Activated naive CD4-positive, alpha-beta T cell treated with anti-CD3 and anti-CD28 coated beads for 36 hours (primary cell): ENCODE measurements at regions of chr2 and their contacts with region 1.

Region 1: GRCh38 chr2:241877989-241878970 is 8.8 kb downstream of the RTP5 start:
- DNase-seq: peak; percentile 80
- H3K4me3 Mint-ChIP-seq: no peak overlapping the region
- H3K27ac Mint-ChIP-seq: no peak overlapping the region
- H3K4me1 Mint-ChIP-seq: peaks cover 24% of the 10 kb centered on the region
- H3K27me3 Mint-ChIP-seq: no peaks in the 10 kb centered on the region

Region 2: DNA sequence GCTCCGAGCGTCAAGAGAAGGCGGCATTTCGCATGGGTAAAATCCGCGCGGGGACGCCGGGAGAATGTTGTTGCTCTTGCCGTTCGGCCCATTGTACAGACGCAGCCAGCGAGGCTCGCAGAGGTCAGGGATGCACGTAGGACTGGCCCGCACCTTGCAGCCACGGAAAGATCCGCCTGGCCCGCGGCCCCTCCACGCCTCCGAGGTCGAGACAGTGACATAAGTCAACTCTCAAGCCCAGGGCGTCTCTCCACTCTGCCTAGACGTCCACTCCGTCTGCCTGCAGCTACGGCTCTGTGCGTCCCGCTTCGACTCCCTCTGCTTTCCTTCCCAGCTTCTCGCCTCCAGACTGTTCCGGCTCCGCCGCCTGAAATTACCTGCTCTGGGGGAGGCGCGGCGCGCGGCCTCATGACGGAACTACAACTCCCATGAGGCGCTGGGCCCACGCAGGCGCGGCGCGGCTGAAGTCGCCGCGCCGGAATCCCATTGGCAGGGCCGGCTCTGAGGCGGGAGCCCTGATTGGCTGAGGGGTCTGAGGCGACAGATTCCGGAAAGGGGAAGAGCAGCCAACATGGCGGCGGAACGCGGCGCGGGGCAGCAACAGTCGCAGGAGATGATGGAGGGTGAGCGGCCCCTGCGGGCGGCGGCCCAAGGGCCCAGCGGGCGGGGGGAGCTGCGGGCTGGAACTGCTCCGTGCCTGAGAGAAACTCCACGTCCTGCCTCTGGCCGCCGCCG is 728.2 kb before region 1 on chr2 and contains the start of gene PPP1R7:
- CTCF ChIA-PET with region 1: no interaction called
- intact Hi-C with region 1: loop called (anchors 5 kb)
- DNase-seq: peak; percentile 97
- H3K4me3 Mint-ChIP-seq: peak within 1 kb of the TSS; percentile 96
- H3K27ac Mint-ChIP-seq: peak within 1 kb of the TSS; percentile 85
- H3K4me1 Mint-ChIP-seq: peaks cover 44% of the 10 kb centered on the region
- H3K27me3 Mint-ChIP-seq: no peaks in the 10 kb centered on the region
- total RNA-seq, gene PPP1R7: 91.2 to 93.8 TPM

Region 3: DNA sequence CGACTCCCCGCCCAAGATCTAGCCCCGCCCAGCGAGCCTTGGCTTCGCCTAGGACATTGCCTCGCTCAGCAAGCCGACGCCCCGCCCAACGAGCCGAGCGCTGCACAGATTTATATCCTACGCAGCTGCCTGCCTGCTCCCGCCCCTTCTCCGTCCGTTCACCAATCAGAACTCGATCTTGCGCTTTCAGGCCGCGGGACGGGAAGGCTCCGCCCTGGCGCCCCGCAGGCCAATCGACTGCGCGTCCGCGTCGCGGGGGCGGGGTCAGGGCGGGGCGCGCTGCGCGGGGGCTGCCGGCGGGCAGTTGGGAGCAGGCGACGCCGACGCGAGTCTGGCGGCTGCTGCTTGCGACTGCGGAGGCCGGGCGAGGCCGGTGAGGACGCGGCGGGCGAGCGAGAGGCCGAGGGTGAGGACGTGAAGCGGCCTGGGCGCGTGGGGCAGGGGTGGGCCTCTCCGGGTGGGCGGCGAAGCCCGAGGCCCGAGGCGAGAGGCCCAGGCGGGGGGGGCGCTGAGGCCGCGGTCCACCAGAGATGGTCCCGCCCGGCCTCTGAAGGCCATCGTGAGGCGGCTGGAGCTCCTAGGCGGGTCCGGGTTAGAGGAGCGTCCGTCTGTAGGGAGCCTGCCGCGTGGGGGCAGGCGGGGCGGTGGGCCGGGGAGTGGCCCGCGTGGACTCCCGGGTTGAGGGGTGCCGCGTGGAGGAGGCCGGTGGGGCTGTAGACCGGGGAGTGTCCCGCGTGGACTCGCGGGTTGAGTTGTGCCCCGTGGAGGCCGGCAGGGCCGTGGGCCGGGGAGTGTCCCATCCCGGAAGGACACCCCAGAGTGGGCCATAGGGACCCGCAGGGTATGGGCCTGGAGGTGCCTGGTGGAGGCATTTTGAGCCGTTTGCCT is 522.1 kb before region 1 on chr2 and contains the start of gene FARP2:
- CTCF ChIA-PET with region 1: no interaction called
- intact Hi-C with region 1: loop called (anchors 1 kb)
- DNase-seq: peak; percentile 99
- H3K4me3 Mint-ChIP-seq: peak within 1 kb of the TSS; percentile 78
- H3K27ac Mint-ChIP-seq: peak within 1 kb of the TSS; percentile 76
- H3K4me1 Mint-ChIP-seq: peaks cover 27% of the 10 kb centered on the region
- H3K27me3 Mint-ChIP-seq: no peaks in the 10 kb centered on the region
- total RNA-seq, gene FARP2: 19.5 to 19.6 TPM

Region 4: DNA sequence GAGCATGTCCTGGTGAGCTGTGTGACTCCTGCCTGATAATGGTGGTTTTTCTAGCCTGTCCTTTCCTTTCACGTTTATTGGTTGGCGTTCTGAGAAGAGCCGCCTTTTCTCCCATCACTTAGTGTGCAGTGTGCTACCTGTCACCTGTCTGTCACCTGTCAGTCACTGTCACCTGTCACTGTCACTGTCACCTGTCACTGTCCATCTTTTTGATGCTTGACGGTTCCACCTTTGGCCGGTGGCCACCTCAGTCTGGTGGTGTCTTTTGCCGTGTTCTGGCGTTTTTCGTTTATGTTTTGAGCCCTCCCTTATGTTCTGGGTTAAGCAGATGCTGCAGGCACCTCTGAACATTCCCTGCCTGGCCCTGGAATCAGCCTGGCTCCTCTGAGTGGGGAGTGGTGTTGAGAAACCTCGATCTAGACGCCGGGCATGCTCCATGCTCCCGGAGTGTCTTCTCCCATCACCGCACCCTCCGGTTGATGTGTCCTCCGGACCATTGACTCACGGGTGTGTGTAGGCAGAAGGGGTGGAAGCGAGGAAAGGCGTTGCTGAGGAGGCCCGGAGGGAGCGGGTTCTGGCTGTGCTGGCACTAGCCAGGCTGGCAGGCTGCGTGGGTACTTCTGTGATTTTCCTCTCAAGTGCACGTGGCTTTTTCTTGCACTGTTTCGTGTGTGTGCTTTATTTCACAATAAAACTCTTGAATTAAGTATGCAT is 212.4 kb before region 1 on chr2:
- CTCF ChIA-PET with region 1: interaction called, 5 read pairs
- intact Hi-C with region 1: loop called (anchors 1 kb)
- DNase-seq: no peak
- H3K4me3 Mint-ChIP-seq: no peak overlapping the region
- H3K27ac Mint-ChIP-seq: no peak overlapping the region
- H3K4me1 Mint-ChIP-seq: peaks cover 7% of the 10 kb centered on the region
- H3K27me3 Mint-ChIP-seq: no peaks in the 10 kb centered on the region

Region 5: GRCh38 chr2:241724259-241724974 is 153.9 kb before region 1 on chr2:
- CTCF ChIA-PET with region 1: interaction called, 13 read pairs
- intact Hi-C with region 1: loop called (anchors 1 kb)
- DNase-seq: peak; percentile 47
- H3K4me3 Mint-ChIP-seq: no peak overlapping the region
- H3K27ac Mint-ChIP-seq: no peak overlapping the region
- H3K4me1 Mint-ChIP-seq: peaks cover 2% of the 10 kb centered on the region
- H3K27me3 Mint-ChIP-seq: no peaks in the 10 kb centered on the region

Region 6: GRCh38 chr2:241844066-241844728 is 34.1 kb before region 1 on chr2:
- CTCF ChIA-PET with region 1: interaction called, 10 read pairs
- intact Hi-C with region 1: loop called (anchors 5 kb)
- DNase-seq: peak; percentile 90
- H3K4me3 Mint-ChIP-seq: peak overlapping the region; percentile 56
- H3K27ac Mint-ChIP-seq: peak overlapping the region; percentile 74
- H3K4me1 Mint-ChIP-seq: peaks cover 37% of the 10 kb centered on the region
- H3K27me3 Mint-ChIP-seq: peaks cover 6% of the 10 kb centered on the region

Region 7: GRCh38 chr2:242088471-242089212 is 210.4 kb after region 1 on chr2:
- CTCF ChIA-PET with region 1: no interaction called
- intact Hi-C with region 1: loop called (anchors 1 kb)
- DNase-seq: peak; percentile 93
- H3K4me3 Mint-ChIP-seq: peak overlapping the region; percentile 87
- H3K27ac Mint-ChIP-seq: peak overlapping the region; percentile 46
- H3K4me1 Mint-ChIP-seq: peaks cover 34% of the 10 kb centered on the region
- H3K27me3 Mint-ChIP-seq: no peaks in the 10 kb centered on the region